Tibial artery (tissue), 4 donors: ENCODE measurements at regions of chr12 and their contacts with region 1.

Region 1: DNA sequence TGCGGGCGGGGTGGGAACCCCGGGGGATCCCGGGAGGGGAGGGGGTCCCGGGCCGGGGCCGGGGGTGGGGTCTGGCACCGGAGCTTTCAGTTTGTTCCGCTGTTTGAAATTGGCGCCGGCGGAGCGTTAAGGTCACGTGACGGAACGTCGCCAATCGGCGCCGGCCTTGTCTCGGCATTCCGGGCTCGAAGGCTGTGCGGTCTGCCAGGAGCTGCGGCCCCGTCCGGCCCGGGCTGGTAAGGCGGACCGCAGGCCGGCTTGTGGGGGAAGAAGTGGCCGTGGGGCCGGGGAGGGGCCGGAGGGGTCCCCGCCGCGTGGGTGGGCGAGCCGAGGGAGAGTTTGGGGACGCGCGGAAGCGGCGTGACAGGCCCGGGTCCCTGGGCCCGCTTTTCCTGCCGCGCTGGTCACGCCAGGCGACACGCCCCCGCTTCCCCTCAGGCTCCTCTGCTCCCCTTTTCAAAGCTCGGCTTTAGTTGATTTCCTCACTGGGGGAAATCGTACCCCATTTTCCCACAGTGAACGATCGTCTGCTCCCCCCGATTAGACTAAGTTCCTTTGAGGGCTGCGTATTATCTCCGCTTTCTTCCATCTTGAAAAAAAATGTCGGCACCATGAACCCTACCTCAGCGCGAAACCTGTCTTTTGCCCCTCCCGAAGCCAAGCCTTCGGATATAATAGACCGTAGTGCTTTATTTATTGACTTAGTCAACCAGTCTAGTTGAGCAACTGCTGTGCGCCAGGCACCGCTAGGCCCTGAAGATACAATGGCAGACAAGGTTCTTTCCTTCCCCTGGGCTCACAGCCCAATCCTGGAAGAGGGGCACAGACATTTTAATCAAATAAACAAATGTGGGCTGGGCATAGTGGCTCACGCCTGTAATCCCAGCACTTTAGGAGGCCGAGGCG is at the starts of genes FOXM1 and RHNO1:
- DNase-seq: peak; percentile 87 to 94
- H3K4me3 ChIP-seq: peak within 1 kb of the TSS; percentile 84 to 90
- H3K27ac ChIP-seq: peak within 1 kb of the TSS; percentile 90 to 92
- H3K4me1 ChIP-seq: peaks cover 0 to 19% (median 14%) of the 10 kb centered on the region in 4 donors
- H3K27me3 ChIP-seq: no peaks in the 10 kb centered on the region
- CTCF ChIP-seq: no peak

Region 2: DNA sequence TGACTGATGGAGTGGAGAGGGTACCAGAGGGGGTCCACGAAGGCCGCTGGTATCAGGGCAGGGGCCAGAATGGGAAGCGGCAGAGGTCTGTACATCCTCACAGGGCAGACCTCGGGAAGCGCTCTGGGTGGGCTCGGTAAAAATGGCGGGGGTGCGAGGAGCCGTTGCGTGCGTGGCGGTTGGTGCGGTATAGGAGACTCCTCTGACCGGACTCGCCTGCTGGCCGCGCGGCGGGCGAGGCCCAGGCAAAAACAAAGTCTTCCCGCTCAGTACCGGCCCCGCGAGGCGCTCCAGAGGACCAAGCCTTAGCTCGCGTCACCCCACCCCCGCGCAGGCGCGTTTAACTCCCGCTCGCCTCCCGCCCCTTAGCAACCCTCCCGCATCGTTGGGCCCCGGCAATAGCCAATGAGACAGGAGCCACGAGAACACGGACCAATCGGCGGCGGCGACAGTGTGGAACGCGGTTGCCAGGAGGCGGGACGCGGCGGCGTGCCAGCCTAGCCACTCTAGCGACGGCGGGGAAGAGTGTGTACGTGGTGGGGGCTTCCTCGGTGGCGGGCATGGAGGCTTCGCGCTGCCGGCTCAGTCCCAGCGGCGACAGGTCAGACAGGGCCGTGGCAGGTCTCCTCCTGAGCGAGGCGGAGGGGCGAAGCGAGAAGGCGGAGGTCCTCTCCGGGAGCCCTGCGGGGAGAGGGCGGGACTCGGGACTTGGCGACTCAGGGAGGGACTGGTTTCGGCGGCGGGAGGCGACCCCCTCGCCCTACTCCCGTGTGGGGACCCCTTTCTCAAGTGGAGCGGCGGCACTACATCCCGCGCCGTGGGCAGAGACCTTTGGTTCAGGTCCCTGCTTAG is 13.3 kb after region 1 on chr12 and contains the start of gene TULP3:
- intact Hi-C with region 1: loop called (anchors 2 kb)
- DNase-seq: peak; percentile 99
- H3K4me3 ChIP-seq: peak within 1 kb of the TSS; percentile 91 to 93
- H3K27ac ChIP-seq: peak within 1 kb of the TSS; percentile 98 to 99
- H3K4me1 ChIP-seq: peaks cover 0 to 45% (median 23%) of the 10 kb centered on the region in 4 donors
- H3K27me3 ChIP-seq: no peaks in the 10 kb centered on the region
- CTCF ChIP-seq: peak in 1 of 2 experiments; percentile 13

Region 3: DNA sequence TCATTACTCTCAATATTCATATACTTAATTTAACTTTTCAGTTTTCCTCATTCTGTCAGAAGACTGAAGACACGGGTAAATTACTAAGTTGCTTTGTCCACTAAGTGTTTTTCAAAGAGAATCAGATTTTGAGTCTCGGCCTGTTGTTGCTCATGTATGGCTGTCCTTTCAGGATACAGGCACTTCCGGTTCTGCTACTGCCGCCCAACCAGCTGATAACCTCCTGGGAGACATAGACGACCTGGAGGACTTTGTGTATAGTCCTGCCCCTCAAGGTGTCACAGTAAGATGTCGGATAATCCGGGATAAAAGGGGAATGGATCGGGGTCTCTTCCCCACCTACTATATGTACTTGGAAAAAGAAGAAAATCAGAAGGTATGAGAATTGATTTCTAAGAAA is 53.6 kb after region 1 on chr12:
- intact Hi-C with region 1: loop called (anchors 10 kb)
- DNase-seq: peak in 1 of 2 donors; percentile 21
- H3K4me3 ChIP-seq: no peak overlapping the region
- H3K27ac ChIP-seq: no peak overlapping the region
- H3K4me1 ChIP-seq: no peaks in the 10 kb centered on the region
- H3K27me3 ChIP-seq: no peaks in the 10 kb centered on the region
- CTCF ChIP-seq: no peak

Region 4: DNA sequence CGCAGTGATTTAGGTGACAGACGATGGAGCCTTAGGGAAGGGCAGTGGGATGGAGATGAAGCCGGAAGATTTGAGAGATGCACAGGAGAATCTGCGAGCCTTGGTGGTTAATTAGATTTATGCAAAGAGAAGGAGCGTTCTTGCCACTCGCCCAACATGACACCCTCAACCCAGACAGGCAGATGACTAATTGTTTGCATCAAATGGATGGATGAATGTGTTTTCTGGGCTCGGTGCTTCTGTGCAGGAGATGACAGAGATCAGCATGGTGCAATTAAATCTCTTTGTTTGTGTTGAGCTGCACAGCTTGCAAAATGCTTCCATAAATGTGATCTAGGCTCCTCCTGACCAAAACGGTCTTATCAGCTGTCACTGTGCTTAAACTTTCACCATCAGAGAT is 411.4 kb after region 1 on chr12:
- intact Hi-C with region 1: no loop called
- DNase-seq: no peak
- H3K4me3 ChIP-seq: no peak overlapping the region
- H3K27ac ChIP-seq: no peak overlapping the region
- H3K4me1 ChIP-seq: peaks cover 0 to 3% (median 1%) of the 10 kb centered on the region in 4 donors
- H3K27me3 ChIP-seq: no peaks in the 10 kb centered on the region
- CTCF ChIP-seq: no peak